Activated CD4-positive, alpha-beta memory T cell treated with anti-CD3 and anti-CD28 coated beads, Interleukin-2, amount 10 ng/mL, durations not matched to agents 7 days and 5 days (primary cell): ENCODE measurements at regions of chr5 and their contacts with region 1.

Region 1: DNA sequence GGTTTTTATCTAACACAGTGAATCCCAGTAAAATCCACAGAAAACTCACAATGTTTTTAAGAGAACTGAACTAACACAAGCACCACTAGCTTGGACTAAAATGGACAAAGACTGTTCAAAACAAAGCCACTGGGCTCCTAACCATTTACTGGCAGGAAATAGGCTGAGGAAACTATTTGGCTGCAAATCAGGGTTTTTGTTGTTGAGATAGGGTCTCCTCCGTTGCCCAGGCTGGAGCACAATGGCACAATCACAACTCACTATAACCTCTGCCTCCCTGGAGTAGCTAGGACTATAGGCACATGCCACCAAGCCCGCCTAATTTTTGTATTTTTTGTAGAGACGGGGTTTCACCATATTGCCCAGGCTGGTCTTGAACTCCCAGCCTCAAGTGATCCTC is 99.7 kb downstream of the THBS4 start:
- DNase-seq: no peak
- H3K4me3 Mint-ChIP-seq: no peak overlapping the region
- H3K27ac Mint-ChIP-seq: peak overlapping the region; percentile 95
- H3K4me1 Mint-ChIP-seq: peaks cover 62% of the 10 kb centered on the region
- H3K27me3 Mint-ChIP-seq: no peaks in the 10 kb centered on the region

Region 2: DNA sequence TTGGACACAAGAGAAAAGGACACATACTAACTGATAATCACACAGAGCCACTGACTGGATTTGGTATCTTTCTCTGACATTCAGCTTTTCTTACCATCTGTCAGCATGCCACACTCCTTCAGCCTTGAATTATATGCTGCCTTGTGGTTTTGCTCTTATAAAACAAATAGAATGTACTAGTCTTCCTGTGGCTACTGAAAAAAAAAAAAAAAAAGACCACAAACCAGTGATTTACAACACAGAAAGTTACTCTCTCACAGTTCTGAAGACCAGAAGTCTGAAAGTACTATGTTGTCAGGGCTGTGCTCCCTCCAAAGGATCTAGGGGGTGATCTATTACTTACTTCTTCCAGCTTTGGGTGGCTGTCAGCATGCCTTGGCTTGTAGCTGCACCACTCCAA is 17.4 kb before region 1 on chr5:
- CTCF ChIA-PET with region 1: interaction called, 10 read pairs
- POLR2A ChIA-PET with region 1: interaction called, 5 read pairs
- DNase-seq: no peak
- H3K4me3 Mint-ChIP-seq: no peak overlapping the region
- H3K27ac Mint-ChIP-seq: peak overlapping the region; percentile 66
- H3K4me1 Mint-ChIP-seq: peaks cover 20% of the 10 kb centered on the region
- H3K27me3 Mint-ChIP-seq: no peaks in the 10 kb centered on the region

Region 3: DNA sequence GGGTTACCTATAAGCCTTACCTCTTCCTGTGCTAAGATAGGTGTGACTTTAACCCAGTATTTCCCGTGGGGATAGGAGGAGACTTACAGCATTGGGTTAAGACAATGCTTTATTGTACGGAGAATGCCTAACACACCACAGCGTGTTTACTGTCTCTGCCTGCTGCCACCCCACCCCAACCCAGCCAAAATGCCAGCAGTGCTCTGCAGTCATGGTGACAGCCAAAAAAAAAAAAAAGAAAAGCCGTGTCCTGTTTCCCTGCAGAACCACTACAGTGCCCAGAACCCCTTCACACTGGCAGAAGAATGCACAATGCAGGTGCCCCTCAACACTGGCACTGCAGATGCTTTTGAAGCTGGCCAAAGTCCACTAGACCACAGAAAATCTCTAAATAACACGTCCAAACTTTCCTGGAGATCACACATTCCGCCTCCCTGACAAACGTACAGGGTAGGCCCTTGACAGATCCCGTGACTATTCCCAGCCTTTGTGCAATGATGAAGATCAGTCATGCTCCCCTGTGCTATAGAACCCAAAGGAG is 18.8 kb after region 1 on chr5:
- CTCF ChIA-PET with region 1: interaction called, 4 read pairs
- POLR2A ChIA-PET with region 1: interaction called, 27 read pairs
- DNase-seq: no peak
- H3K4me3 Mint-ChIP-seq: no peak overlapping the region
- H3K27ac Mint-ChIP-seq: peak overlapping the region; percentile 71
- H3K4me1 Mint-ChIP-seq: peaks cover 47% of the 10 kb centered on the region
- H3K27me3 Mint-ChIP-seq: no peaks in the 10 kb centered on the region

Region 4: DNA sequence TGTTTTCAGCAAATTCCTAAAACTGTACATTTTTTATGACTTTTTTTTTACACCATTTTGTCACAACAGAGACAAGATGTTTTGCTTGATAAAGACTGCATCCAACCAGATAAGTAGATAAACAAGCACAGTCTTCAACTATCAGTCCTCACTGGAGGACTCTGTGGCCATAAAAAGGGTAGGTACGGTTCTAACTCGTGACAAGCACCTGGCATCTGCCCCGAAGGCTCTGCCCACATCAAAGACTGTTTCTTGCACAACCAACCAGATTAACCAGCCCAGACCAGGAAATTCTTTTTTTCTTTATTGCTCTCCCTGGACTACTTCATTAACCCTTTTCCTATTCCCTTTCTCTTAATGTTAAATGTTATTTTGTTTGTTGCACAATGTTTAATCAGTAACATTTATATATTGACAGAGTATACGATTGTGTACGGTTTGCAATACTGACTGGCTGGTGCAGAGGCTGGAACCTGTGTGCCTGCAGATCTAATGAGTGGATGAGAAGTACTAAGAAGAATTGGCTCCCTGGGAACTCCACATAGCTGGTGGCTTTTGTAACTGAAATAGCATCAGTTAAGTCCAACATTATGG is 46.8 kb after region 1 on chr5:
- CTCF ChIA-PET with region 1: no interaction called
- POLR2A ChIA-PET with region 1: interaction called, 13 read pairs
- DNase-seq: peak; percentile 62
- H3K4me3 Mint-ChIP-seq: peak overlapping the region; percentile 40
- H3K27ac Mint-ChIP-seq: peak overlapping the region; percentile 89
- H3K4me1 Mint-ChIP-seq: peaks cover 71% of the 10 kb centered on the region
- H3K27me3 Mint-ChIP-seq: no peaks in the 10 kb centered on the region